ENCODE measurements at regions of chr2 and their contacts with region 1.

Region 1: GRCh38 chr2:43080571-43081021 is 145.8 kb downstream of the ZFP36L2 start:
- DNase-seq: peak in 1 of 2 donors; percentile 85
- H3K4me3 ChIP-seq: no peak overlapping the region
- CTCF ChIP-seq: no peak
- POLR2A ChIP-seq: no peak

Region 2: GRCh38 chr2:41750829-41751228 is 1329.8 kb before region 1 on chr2:
- intact Hi-C with region 1: no loop called
- DNase-seq: no peak
- H3K4me3 ChIP-seq: no peak overlapping the region
- CTCF ChIP-seq: no peak
- POLR2A ChIP-seq: no peak

Region 3: GRCh38 chr2:42917425-42917927 is 163.1 kb before region 1 on chr2:
- intact Hi-C with region 1: no loop called
- DNase-seq: peak; percentile 76 to 93
- H3K4me3 ChIP-seq: no peak overlapping the region
- CTCF ChIP-seq: no peak
- POLR2A ChIP-seq: no peak

Region 4: GRCh38 chr2:43158259-43158880 is 77.8 kb after region 1 on chr2:
- intact Hi-C with region 1: no loop called
- DNase-seq: peak; percentile 74 to 96
- H3K4me3 ChIP-seq: no peak overlapping the region
- CTCF ChIP-seq: no peak
- POLR2A ChIP-seq: no peak

Region 5: DNA sequence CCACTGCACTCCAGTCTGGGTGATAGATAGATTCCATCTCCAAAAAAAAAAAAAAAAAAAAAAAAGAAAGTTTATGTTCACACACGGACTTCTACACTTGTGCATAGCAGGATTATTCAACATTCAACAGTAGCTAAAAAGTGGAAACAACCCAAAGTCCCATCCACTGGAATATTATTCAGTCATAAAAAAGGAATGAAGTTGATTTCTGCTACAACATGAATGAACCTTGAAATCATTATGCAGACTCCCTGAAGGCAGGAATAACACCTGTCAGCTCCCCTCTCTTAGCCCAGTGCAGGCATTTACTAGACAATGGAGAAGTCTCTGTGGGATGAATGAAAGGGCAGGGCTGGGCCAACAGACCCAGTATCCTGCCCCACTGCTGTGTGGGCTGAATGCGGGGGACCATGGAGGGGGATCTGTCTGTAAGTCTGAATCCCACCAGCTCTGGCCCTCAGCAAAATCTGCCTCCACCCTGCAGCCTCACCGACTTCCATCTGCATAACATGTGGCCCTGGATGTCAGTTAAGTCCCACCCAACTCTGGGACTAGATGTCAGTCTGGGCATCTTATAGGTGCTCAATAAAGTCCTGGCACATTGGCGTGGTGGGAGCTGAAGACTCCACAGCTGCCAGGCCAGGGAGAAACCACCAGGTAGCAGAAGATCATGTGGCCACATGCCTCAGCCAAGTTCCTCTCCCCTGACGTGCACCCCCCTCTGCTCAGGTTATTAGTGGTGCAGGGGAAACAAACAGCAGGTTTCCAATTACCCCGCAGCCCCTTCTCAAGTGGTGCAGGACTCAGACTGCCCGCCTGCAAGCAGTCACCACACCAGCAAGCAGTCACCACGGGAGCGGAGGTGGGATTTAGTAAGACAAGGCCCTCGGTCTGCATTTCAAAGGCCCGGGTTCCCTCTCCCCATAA is 136.9 kb after region 1 on chr2:
- intact Hi-C with region 1: loop called (anchors 2 kb)
- DNase-seq: no peak
- H3K4me3 ChIP-seq: no peak overlapping the region
- CTCF ChIP-seq: no peak
- POLR2A ChIP-seq: no peak